ENCODE measurements at regions of chr13 and their contacts with region 1.

Region 1: DNA sequence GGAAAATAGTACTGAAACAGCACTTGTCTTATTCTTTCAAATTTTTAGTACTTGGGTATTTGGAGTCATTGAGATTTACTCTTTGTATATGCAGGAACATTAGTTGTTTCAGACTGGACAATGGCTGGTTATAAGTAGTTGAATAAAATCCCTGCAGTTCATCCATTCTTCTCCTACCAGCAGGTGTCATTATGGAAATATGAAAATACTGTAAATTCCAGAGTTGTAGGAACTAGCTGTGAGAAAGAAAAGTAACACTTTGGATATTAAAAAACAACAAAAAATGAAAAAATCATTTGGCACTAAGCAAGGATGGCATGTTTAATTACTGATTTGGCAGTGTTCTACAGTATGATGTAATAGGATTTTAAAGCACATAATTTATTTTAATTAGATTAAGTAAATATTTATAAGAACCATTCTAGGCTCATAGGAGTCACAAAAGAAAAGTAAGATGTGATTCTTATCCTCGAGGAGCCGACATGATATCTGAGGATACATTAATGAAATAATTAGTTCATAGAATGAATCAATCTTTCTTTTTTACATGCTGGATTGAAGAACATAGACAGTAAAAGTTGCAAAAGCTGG is 155.3 kb downstream of the KCNRG start:
- DNase-seq: no peak
- ATAC-seq: no peak
- H3K4me3 ChIP-seq: no peak overlapping the region
- H3K27ac ChIP-seq: no peak overlapping the region
- H3K4me1 ChIP-seq: no peaks in the 10 kb centered on the region
- H3K27me3 ChIP-seq: no peaks in the 10 kb centered on the region

Region 2: GRCh38 chr13:50106559-50106958 is 64.0 kb before region 1 on chr13:
- intact Hi-C with region 1: no loop called
- DNase-seq: no peak
- ATAC-seq: no peak
- H3K4me3 ChIP-seq: no peak overlapping the region
- H3K27ac ChIP-seq: no peak overlapping the region
- H3K4me1 ChIP-seq: no peaks in the 10 kb centered on the region
- H3K27me3 ChIP-seq: no peaks in the 10 kb centered on the region

Region 3: DNA sequence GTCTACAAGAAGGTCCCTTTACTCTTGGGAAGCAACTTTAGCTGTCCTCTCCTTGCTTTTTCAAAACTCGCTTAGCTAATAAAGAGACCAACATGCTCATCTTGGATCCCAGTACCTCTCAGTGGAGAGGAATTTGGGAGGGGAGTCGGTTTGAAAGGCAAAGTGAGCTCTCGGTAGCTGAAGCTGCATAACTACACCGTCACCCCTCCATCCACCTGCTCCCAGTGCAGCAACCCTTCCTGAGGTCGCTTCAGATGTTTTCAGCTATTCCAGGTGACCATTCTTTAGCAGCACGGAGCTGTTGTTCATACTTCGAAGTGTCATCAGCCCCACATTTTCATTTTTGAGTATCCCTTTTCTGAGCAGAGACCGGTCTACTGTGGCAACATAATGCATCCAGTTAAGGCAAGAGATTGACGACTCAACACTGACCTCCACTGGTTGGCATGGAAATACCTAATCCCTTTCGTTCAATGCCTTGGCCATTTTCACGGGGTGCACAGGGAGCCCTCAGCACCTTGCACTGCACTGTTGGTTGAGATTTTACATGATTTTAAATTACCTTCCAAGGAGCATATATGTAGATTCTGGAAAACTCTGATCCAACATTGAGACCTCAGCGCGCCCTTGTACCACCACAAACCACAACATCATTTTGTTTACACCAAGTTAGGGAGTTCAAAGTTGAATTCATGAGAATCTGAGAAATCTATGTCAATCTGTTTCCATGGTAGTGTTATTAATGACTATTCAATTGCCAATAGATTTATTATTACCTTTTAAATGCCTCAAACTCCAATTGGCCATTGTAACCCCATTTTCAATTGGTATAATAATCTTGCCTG is 630.8 kb after region 1 on chr13:
- intact Hi-C with region 1: loop called (anchors 10 kb)
- DNase-seq: peak in 1 of 2 donors; percentile 55
- ATAC-seq: peak; percentile 92
- H3K4me3 ChIP-seq: no peak overlapping the region
- H3K27ac ChIP-seq: no peak overlapping the region
- H3K4me1 ChIP-seq: peaks cover 0 to 3% of the 10 kb centered on the region in 2 donors
- H3K27me3 ChIP-seq: no peaks in the 10 kb centered on the region

Region 4: DNA sequence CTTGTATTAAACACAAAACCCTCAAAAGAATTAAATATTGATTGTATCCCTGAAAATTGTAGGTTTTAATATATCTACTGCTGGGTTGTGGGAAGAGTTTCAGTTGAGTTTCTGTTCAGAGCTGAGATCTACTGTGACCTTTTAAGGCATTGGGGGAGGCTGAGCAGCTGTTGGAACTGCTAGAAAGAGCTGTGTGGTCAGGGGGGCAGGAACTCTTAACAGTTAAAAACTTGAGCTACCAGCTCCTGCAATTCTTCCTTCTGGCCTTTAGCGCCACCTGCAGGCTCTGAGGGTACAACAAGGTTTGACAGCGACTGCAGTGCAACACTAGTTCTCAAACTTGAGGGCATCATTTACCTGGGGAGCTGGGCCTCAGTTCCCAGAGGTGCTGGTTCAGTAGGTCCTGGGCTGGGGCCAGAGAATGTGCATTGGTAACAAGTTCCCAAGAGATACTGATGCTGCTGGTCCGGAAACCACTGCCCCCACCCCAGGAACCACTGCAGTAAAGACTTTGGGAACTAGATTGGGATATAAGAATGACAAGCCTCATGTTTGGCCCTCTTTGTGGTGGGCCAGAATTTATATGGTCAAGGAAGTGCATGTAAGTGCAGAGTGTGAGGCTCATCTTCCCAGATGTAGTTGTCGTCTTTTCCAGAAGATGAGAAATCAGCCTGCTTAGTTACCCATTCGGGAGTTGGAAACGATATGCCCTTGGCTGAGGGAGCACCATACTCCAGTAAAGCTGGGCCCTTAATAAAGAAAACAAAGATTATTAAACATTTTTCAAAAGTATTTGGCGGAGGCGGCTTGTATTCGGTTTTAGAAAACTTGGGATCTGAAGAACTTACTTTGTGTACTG is 741.6 kb after region 1 on chr13:
- intact Hi-C with region 1: loop called in 1 of 2 experiments (anchors 5 kb)
- DNase-seq: peak; percentile 93 to 95
- ATAC-seq: peak; percentile 67
- H3K4me3 ChIP-seq: no peak overlapping the region
- H3K27ac ChIP-seq: no peak overlapping the region
- H3K4me1 ChIP-seq: no peaks in the 10 kb centered on the region
- H3K27me3 ChIP-seq: no peaks in the 10 kb centered on the region

Measured in aorta (tissue), 5 donors.